ENCODE measurements at regions of chr12 and their contacts with region 1.

Region 1: DNA sequence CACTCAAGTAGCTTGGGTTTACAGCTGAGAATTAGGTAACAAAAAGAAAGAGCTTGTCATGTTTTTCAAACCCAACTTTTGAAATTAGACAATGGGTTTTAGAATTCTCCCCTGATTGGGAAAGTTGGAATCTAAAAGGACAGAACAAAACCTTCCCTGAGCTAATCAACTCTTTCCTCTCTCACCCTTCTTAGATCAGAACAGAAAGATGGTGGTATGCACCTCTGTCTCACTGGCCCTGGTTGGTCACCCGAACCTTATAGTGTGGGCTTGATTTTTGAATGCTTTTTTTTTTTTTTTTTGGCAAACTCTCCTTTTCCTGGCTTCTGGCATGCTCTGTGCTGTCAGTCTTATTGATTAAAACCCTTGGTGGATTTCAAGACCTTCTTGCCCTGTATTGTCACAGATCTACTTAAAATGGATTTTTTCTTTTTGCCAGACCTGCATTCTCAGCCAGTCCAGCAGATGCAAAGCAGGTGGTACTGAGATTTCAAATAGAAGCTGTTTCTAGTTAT is 251.1 kb upstream of the RMST start:
- DNase-seq: no peak
- ATAC-seq: no peak
- H3K4me3 Mint-ChIP-seq: no peak overlapping the region
- H3K27ac Mint-ChIP-seq: no peak overlapping the region
- H3K4me1 Mint-ChIP-seq: no peaks in the 10 kb centered on the region
- H3K27me3 Mint-ChIP-seq: no peaks in the 10 kb centered on the region
- CTCF ChIP-seq: no peak

Region 2: GRCh38 chr12:97142737-97143410 is 68.6 kb before region 1 on chr12:
- CTCF ChIA-PET with region 1: no interaction called
- POLR2A ChIA-PET with region 1: no interaction called
- intact Hi-C with region 1: no loop called
- DNase-seq: no peak
- ATAC-seq: no peak
- H3K4me3 Mint-ChIP-seq: no peak overlapping the region
- H3K27ac Mint-ChIP-seq: no peak overlapping the region
- H3K4me1 Mint-ChIP-seq: no peaks in the 10 kb centered on the region
- H3K27me3 Mint-ChIP-seq: no peaks in the 10 kb centered on the region
- CTCF ChIP-seq: no peak

Region 3: GRCh38 chr12:97198609-97199008 is 12.9 kb before region 1 on chr12:
- CTCF ChIA-PET with region 1: no interaction called
- POLR2A ChIA-PET with region 1: no interaction called
- intact Hi-C with region 1: loop called (anchors 1 kb)
- DNase-seq: no peak
- ATAC-seq: no peak
- H3K4me3 Mint-ChIP-seq: no peak overlapping the region
- H3K27ac Mint-ChIP-seq: no peak overlapping the region
- H3K4me1 Mint-ChIP-seq: no peaks in the 10 kb centered on the region
- H3K27me3 Mint-ChIP-seq: peaks cover under 1% of the 10 kb centered on the region
- CTCF ChIP-seq: no peak

Region 4: DNA sequence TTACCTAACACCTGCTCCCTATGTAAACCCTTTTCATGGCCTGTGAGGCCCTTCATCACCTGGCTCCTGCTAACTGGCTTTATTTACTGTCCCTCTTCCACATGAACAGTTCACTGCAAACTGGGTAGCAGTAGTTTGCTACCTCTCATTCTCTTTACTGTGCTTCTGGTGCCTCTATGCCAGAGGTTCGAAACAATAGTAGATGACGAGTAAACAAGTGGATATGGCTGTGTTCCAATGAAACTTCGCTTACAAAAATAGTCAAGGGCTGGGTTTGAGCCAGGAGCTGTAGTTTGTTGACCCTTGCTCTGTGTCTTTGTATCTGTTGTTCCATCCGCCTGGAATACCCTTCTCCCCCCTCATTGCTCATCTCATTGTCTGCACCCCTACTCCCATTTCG is 17.5 kb after region 1 on chr12:
- CTCF ChIA-PET with region 1: no interaction called
- POLR2A ChIA-PET with region 1: no interaction called
- intact Hi-C with region 1: no loop called
- DNase-seq: no peak
- ATAC-seq: no peak
- H3K4me3 Mint-ChIP-seq: no peak overlapping the region
- H3K27ac Mint-ChIP-seq: no peak overlapping the region
- H3K4me1 Mint-ChIP-seq: no peaks in the 10 kb centered on the region
- H3K27me3 Mint-ChIP-seq: peaks cover 2% of the 10 kb centered on the region
- CTCF ChIP-seq: no peak

Region 5: DNA sequence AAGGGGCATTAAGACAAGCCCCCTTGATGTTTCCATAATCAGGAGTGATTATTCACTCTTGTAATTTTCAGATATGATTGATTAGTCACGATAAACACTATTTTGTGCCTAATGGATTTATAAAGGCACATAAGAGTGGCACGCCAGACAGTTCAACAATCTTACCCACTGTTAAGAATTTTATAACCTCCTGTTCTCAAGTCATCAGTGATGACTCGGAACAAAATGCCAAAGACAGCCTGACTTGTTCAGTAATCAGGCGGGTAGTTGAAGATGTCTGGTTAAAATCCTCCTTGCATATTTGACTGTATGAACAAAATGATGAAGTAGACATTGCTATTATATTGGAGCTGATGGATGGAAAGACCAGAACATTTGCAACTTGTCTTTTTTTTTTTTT is 39.0 kb after region 1 on chr12:
- CTCF ChIA-PET with region 1: no interaction called
- POLR2A ChIA-PET with region 1: no interaction called
- intact Hi-C with region 1: no loop called
- DNase-seq: no peak
- ATAC-seq: no peak
- H3K4me3 Mint-ChIP-seq: no peak overlapping the region
- H3K27ac Mint-ChIP-seq: no peak overlapping the region
- H3K4me1 Mint-ChIP-seq: no peaks in the 10 kb centered on the region
- H3K27me3 Mint-ChIP-seq: peaks cover 4% of the 10 kb centered on the region
- CTCF ChIP-seq: no peak

Measured in activated CD8-positive, alpha-beta T cell treated with anti-CD3 and anti-CD28 coated beads for 36 hours (primary cell).